CD8-positive, alpha-beta memory T cell (primary cell): ENCODE measurements at regions of chr22 and their contacts with region 1.

Region 1: DNA sequence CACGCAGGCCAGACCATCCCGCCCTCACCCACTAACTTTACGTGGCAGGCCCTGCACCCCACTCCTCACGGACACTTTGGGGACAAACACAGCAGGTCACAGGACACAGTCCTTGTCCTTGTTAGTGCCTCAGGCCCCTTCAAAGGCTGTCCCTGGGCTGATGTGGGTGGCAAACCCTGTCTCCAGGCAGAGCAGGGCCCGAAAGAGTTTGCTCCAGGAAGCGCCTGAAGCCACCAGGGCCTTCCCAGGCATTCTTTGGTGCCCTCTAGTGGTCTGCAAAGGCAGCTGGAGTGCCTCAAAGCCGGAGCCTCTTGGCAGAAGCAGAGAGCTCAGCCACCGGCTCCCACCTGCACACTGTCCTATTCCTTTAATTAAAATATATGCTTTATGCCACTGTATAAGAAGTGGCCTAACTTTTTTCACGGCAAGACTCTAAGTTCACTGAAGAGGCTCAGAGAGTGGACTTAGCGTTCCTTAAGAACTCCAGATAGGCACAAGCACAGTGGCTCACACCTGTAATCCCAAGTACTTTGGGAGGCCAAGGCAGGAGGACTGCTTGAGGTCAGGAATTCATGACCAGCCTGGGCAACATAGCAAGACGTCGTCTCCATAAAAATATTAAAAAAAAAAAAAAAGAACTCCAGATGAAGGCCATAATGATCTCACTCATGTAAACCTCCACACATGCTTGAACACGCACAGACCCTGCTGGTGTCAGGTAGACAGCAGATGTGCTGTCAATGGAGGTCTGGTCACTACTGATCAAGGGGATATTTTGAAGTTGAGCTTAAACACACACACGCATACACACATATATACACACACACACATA is 11.1 kb downstream of the TXN2 start:
- DNase-seq: peak; percentile 72 to 90 (median 83)
- H3K4me3 ChIP-seq: no peak overlapping the region
- H3K4me3 Mint-ChIP-seq: no peak overlapping the region
- H3K27ac ChIP-seq: no peak overlapping the region
- H3K27ac Mint-ChIP-seq: peak overlapping the region in 7 of 8 donors; percentile 35 to 80 (median 75)
- H3K4me1 ChIP-seq: peaks cover 21% of the 10 kb centered on the region
- H3K4me1 Mint-ChIP-seq: peaks cover 13 to 23% (median 14%) of the 10 kb centered on the region in 3 donors
- H3K27me3 ChIP-seq: no peaks in the 10 kb centered on the region
- H3K27me3 Mint-ChIP-seq: no peaks in the 10 kb centered on the region

Region 2: GRCh38 chr22:36291831-36292740 is 178.3 kb before region 1 on chr22:
- CTCF ChIA-PET with region 1: interaction called, 12 read pairs
- POLR2A ChIA-PET with region 1: no interaction called
- DNase-seq: peak in 1 of 5 donors; percentile 48
- H3K4me3 ChIP-seq: no peak overlapping the region
- H3K4me3 Mint-ChIP-seq: peak overlapping the region in 6 of 7 donors; percentile 37 to 73 (median 58)
- H3K27ac ChIP-seq: no peak overlapping the region
- H3K27ac Mint-ChIP-seq: peak overlapping the region; percentile 70 to 96 (median 87)
- H3K4me1 ChIP-seq: peaks cover 34% of the 10 kb centered on the region
- H3K4me1 Mint-ChIP-seq: peaks cover 49 to 68% (median 66%) of the 10 kb centered on the region in 3 donors
- H3K27me3 ChIP-seq: no peaks in the 10 kb centered on the region
- H3K27me3 Mint-ChIP-seq: peaks cover 0 to 8% of the 10 kb centered on the region in 2 donors

Region 3: DNA sequence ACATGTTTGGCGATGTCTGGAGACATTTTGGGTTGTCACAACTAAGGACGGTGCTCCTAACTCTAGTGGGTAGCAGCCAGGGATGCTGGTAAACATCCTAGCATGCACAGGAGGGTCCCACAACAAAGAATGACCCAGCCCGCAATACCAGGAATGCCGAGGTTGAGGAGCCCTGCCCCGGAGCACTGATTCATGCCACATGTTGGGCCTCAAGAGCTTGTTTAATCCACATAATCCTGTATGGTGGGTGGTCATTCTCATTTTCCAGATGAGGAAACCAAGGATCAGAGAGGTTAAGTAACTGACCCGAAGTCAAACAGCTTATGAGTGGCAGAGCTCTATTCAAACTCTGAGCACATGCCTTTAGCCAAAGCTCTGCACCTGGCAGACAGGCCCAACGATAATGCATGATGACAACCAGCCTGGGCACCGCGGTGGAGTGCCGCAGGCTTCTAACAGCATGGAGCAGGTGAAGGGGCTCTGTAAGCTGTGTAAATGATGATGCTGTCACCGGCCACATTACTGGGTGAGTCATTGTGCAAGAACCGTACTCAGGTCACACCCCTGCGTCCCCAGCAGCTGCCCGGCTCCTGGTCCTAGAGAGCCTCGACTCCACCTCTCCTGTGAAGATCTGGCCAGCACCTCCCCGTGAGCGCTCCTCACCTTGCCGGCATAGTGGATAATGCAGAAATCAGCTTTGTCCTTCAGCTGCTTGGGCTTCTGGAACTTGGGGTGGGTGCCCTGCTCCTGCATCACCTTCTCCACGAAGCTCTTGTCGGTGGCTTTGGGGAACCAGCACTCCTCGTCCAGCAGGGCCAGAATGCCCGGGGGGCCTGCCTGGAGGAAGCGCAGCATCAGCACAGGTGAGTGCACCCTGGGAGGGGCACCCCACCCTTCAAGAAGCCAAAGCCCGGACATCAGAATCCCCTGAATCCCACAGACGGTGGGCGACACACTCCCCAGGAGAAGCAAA is 158.7 kb before region 1 on chr22:
- CTCF ChIA-PET with region 1: interaction called, 11 read pairs
- POLR2A ChIA-PET with region 1: no interaction called
- DNase-seq: no peak
- H3K4me3 ChIP-seq: no peak overlapping the region
- H3K4me3 Mint-ChIP-seq: no peak overlapping the region
- H3K27ac ChIP-seq: no peak overlapping the region
- H3K27ac Mint-ChIP-seq: peak overlapping the region in 3 of 8 donors; percentile 38 to 73 (median 70)
- H3K4me1 ChIP-seq: no peaks in the 10 kb centered on the region
- H3K4me1 Mint-ChIP-seq: peaks cover 3 to 7% (median 5%) of the 10 kb centered on the region in 3 donors
- H3K27me3 ChIP-seq: no peaks in the 10 kb centered on the region
- H3K27me3 Mint-ChIP-seq: peaks cover 0 to 2% of the 10 kb centered on the region in 2 donors

Region 4: DNA sequence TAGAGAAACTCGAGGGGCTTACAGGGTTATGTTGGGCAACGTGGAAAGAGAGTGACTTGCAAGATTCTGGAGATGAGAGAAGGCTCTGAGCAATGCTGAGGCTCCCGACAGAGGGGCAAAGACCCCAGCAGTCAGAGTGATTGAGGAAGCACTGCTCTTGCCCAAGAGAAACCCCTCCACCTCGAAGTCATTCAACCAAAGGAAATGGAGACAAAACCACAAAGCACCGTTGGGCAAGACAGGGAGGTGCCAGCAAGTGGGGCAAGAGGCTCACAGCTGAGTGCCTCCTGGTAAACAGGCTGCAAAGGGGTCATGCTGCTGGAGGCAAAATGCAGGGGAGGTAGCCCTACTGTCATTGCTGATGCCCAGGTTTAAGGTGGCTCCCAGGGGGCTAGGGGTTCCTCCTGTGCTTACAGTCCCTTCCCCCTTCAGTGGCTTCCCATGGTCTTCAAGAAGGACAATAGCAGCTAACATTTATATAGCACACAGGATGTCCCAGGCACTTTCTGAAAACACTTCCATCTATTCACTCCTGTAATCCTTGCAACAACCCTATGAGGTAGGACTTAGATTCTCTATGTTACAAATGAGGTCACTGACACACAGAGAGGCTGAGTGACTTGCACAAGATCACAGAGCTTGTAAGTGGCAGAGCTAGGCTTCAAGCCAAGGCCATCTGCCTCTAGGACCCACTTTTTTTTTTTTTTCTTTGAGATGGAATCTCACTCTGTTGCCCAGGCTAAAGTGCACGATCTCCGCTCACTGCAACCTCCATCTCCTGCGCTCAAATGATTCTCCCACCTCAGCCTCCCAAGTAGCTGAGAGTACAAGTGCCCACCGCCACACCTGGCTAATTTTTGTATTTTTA is 64.5 kb before region 1 on chr22:
- CTCF ChIA-PET with region 1: interaction called, 16 read pairs
- POLR2A ChIA-PET with region 1: no interaction called
- DNase-seq: peak; percentile 39 to 81 (median 69)
- H3K4me3 ChIP-seq: peak overlapping the region; percentile 11
- H3K4me3 Mint-ChIP-seq: peak overlapping the region; percentile 29 to 71 (median 61)
- H3K27ac ChIP-seq: peak overlapping the region; percentile 45
- H3K27ac Mint-ChIP-seq: peak overlapping the region; percentile 85 to 97 (median 94)
- H3K4me1 ChIP-seq: peaks cover 56% of the 10 kb centered on the region
- H3K4me1 Mint-ChIP-seq: peaks cover 47 to 65% (median 60%) of the 10 kb centered on the region in 3 donors
- H3K27me3 ChIP-seq: no peaks in the 10 kb centered on the region
- H3K27me3 Mint-ChIP-seq: no peaks in the 10 kb centered on the region

Region 5: DNA sequence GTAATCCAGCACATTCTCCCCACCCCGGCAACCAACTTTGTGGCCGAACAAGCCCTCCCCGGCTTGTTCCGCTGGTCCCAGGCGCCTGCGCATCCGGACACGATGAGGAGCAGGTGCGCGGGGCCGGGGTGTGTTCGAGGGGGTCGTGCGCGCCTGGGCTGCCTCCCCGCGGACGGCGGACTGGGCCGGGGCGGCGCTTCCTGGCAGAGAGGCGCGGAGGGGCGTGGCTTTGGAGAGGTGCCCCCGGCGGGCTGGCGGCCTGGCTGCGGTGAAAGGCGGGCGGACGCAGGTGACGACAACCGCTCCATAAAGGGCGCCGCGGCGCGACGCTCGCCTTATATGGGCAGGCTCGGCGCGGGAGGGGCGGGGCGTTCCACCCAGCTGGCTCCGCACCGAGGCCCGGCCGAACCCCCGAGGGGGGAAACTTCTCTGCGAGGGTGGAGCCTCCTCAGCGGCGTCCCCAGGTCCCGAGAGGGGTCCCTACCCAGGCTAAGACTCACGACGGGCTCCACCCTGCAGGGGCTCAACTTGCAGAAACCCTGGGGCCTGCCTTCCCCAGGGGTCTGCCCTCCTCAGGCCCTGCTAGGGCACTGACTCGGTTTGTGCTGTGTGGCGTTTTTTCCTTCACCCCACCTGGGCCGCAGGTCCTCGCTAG is 15.3 kb before region 1 on chr22:
- CTCF ChIA-PET with region 1: interaction called, 12 read pairs
- POLR2A ChIA-PET with region 1: interaction called, 3 read pairs
- DNase-seq: peak; percentile 94 to 97 (median 95)
- H3K4me3 ChIP-seq: peak overlapping the region; percentile 85
- H3K4me3 Mint-ChIP-seq: peak overlapping the region; percentile 78 to 89 (median 82)
- H3K27ac ChIP-seq: peak overlapping the region; percentile 86
- H3K27ac Mint-ChIP-seq: peak overlapping the region; percentile 87 to 95 (median 92)
- H3K4me1 ChIP-seq: peaks cover 49% of the 10 kb centered on the region
- H3K4me1 Mint-ChIP-seq: peaks cover 39 to 53% (median 45%) of the 10 kb centered on the region in 3 donors
- H3K27me3 ChIP-seq: no peaks in the 10 kb centered on the region
- H3K27me3 Mint-ChIP-seq: peaks cover 0 to 2% of the 10 kb centered on the region in 2 donors